ENCODE measurements at regions of chr5 and their contacts with region 1.

Region 1: DNA sequence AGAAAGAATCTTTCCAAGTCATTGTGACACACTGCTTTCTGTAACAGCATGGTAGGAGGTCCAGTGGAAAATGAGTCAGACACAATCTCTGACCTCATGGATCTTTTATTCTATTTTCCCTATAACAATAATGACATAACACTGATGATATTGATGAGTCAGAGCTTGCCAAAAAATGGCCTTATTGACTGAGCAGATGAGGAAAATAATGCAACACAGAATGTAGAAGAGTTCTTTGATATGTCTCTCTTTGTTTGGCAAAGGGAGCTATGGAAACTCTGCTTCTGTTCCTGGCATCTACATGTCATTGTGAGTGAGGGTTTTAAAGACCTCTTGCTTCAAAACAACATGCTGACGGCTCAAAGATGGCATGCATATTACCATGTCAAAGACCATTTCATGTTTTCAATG is 443.1 kb upstream of the ZNF608 start:
- DNase-seq: no peak
- ATAC-seq: no peak
- H3K4me3 ChIP-seq: no peak overlapping the region
- H3K27ac ChIP-seq: no peak overlapping the region
- H3K4me1 ChIP-seq: peaks cover 30% of the 10 kb centered on the region
- H3K27me3 ChIP-seq: no peaks in the 10 kb centered on the region
- CTCF ChIP-seq: no peak

Region 2: GRCh38 chr5:124649491-124650146 is 539.9 kb before region 1 on chr5:
- intact Hi-C with region 1: loop called in 1 of 2 experiments (anchors 10 kb)
- DNase-seq: peak; percentile 63 to 84
- ATAC-seq: no peak
- H3K4me3 ChIP-seq: peak overlapping the region; percentile 23
- H3K27ac ChIP-seq: peak overlapping the region; percentile 81
- H3K4me1 ChIP-seq: peaks cover 27% of the 10 kb centered on the region
- H3K27me3 ChIP-seq: no peaks in the 10 kb centered on the region
- CTCF ChIP-seq: no peak

Region 3: DNA sequence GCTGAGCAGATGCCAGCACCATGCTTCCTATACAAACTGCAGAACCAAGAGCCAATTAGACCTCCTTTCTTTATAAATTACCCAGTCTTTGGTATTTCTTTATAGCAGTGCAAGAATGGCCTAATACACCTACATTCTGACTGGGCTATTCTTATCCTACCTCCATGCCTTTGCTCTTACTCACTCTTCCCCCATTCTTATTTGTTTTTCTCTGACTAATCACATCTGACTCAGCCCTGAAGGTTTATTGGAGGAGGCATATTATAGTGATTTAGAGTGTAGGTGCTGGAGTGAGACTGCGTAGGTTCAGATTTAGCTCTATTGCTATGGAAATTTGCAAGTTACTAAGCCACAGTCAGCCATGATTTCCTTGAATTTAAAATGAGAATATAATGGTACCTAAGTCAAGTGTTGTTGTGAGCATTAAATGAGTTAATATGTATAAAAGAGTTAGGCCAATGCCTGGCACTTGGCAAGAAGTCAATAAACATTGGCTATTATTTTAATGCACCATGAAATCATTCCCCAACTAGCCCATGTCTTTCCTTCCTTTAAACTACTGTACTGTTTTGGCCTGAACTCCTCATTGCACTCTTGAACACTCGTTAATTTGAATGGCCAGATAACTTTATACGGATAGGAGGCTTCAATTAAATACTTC is 88.1 kb after region 1 on chr5:
- intact Hi-C with region 1: no loop called
- DNase-seq: no peak
- ATAC-seq: peak in 3 of 4 donors; percentile 46 to 72 (median 57)
- H3K4me3 ChIP-seq: no peak overlapping the region
- H3K27ac ChIP-seq: no peak overlapping the region
- H3K4me1 ChIP-seq: no peaks in the 10 kb centered on the region
- H3K27me3 ChIP-seq: no peaks in the 10 kb centered on the region
- CTCF ChIP-seq: no peak

Region 4: DNA sequence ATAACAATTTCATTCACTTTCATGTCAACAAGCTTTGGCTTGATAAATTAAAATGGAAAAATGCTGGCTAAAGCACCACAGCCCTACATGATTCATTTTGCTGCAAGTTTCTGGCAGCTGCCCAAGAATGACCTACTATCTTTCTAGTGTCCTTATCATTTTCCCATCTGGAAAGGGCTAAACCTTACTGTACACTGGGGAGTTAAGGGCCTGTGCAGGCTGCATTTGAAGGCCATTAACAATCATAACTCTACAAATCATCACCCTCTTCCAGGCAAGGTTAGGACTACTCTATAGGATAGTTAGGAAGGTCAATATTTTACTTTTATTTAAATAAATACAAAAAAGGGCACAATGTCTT is 136.6 kb after region 1 on chr5:
- intact Hi-C with region 1: no loop called
- DNase-seq: peak in 1 of 2 donors; percentile 15
- ATAC-seq: peak in 1 of 4 donors; percentile 41
- H3K4me3 ChIP-seq: no peak overlapping the region
- H3K27ac ChIP-seq: no peak overlapping the region
- H3K4me1 ChIP-seq: no peaks in the 10 kb centered on the region
- H3K27me3 ChIP-seq: no peaks in the 10 kb centered on the region
- CTCF ChIP-seq: no peak